CD4-positive, alpha-beta memory T cell (primary cell): ENCODE measurements at regions of chr7 and their contacts with region 1.

Region 1: GRCh38 chr7:34696415-34696814 is 38.4 kb downstream of the NPSR1 start:
- DNase-seq: no peak
- H3K4me3 ChIP-seq: no peak overlapping the region
- H3K4me3 Mint-ChIP-seq: no peak overlapping the region
- H3K27ac ChIP-seq: no peak overlapping the region
- H3K27ac Mint-ChIP-seq: no peak overlapping the region
- H3K4me1 ChIP-seq: no peaks in the 10 kb centered on the region
- H3K4me1 Mint-ChIP-seq: no peaks in the 10 kb centered on the region
- H3K27me3 ChIP-seq: no peaks in the 10 kb centered on the region
- H3K27me3 Mint-ChIP-seq: peaks cover 4% of the 10 kb centered on the region in 2 donors

Region 2: DNA sequence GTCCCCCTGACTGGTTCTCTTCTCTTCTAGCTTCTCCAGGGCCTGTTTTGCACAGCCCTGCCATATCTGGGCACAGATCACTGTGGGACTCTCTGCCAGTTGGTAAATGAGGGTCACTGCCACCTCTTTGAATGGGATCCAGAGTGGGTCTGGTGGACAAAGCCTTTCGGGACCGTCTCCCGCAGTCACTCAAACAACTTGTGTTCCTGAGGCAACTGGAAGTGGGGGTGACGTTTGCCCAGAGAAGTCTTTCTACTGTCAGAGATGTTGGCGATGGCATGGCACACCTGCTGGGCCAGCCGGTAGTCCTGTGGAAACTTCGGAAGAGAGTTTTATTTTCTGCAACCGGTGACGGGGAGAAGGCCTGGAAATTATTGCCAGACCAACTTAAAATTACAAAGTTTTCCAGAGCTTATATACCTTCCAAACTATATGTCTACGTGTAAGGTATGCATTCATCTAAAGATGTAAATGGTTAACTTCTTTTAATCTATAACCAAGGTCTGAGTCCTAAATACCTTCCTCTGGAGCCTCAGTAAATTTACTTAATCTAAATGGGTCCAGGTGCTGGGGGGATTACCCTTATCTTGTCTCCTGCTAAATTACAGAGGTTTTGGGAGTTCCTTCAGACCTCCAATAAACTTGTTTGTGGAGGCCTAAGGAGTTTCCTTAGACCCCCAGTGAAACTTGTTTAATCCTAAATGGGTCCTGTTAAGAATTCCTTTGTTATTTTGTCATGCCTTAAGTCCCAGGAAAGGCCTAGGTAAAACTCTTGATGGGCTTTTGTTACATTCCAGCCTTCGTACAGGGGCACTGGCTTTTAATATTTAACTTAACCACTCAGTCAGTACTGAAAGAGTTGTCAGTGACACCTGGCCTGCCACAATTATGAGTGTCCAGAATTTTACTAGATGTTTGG is 55.6 kb after region 1 on chr7:
- CTCF ChIA-PET with region 1: no interaction called
- POLR2A ChIA-PET with region 1: no interaction called
- intact Hi-C with region 1: loop called (anchors 2 kb)
- DNase-seq: no peak
- H3K4me3 ChIP-seq: no peak overlapping the region
- H3K4me3 Mint-ChIP-seq: no peak overlapping the region
- H3K27ac ChIP-seq: no peak overlapping the region
- H3K27ac Mint-ChIP-seq: no peak overlapping the region
- H3K4me1 ChIP-seq: no peaks in the 10 kb centered on the region
- H3K4me1 Mint-ChIP-seq: no peaks in the 10 kb centered on the region
- H3K27me3 ChIP-seq: no peaks in the 10 kb centered on the region
- H3K27me3 Mint-ChIP-seq: peaks cover 0 to 1% of the 10 kb centered on the region in 2 donors